ENCODE measurements at regions of chr16 and their contacts with region 1.

Region 1: GRCh38 chr16:12095275-12096156 is 119.0 kb downstream of the SNX29 start:
- DNase-seq: peak; percentile 76
- ATAC-seq: peak; percentile 63 to 74

Region 2: DNA sequence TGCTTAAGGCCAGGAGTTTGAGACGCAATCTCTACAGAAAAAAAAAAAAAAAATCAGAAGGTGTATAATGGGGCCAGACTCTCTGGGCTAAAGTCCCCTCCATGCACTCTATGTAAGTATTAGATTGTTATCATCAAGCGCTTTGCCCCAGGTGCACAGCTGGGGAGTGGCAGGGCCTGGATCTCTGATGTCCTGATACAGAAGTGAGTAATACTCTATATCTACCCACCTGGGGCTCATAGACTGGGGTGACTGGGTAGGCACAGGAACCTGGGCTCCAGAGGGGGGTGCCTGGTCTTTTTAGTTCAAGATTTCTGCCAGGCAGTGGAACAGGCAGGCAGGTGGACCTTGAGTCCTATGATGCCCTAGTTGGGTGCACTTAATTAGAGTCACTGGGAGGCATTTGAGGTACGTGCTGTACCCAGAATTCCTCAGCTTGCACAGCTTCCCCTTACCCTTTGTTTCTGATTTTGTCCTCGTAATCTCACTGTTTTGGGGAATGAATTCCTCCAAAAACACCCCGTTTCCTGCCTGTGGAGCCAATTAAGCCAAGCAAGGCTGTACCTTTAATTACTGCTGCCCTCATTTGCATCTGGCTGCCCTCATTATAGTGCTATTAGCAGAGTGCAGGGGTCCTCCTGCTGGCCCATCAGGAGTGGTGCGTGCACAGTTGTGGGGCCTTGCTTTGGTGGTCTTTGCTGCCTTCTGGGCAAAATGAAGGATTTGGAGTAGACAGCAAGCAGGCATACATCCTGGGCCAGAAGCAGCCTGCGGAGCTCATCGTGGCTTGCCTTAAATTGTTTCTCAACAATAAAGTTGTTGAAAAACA is 120.0 kb after region 1 on chr16:
- intact Hi-C with region 1: loop called (anchors 2 to 10 kb)
- DNase-seq: no peak
- ATAC-seq: no peak

Region 3: DNA sequence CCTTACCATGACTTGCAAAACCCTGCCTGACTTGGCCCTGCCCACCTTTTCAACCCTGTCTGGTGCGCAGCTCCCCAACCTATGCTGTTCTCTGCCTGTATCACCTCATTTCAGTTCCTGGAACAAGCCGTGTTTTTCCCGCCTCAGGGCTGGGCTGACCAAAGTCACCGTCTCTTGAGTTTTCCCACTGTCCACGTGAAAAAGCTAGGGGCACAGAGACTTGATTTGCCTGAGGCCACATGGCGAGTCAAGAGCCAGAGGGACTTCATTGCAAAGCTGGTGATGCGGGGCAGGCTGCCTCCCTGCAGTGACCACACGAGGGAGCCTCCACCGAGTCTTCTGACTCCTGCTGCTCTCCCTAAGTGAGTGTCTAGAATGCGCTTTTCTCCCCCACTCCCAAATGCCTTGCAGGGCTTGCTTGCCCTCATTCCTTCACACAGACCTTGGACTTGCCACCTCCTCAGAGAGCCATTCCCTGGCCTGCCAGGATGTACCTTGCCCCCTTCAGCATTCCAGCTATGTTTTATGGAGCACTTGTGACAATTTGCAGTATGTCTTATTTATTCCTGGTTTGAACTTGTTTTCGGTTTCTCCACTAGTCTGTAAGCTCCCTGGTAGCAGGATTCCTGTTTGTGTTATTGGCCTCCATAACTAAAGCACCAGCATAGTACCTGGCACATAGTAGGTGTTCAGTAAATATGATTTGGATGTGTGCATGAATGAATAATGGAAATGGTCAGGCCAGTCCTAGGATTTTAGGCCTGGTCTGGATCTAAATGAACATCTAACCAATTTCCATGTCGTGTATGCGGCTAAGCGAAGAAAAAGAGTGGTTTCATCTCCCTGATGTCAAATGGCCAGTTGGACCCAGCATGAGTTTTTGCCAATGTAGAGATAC is 133.3 kb after region 1 on chr16:
- intact Hi-C with region 1: loop called in 1 of 2 experiments (anchors 10 kb)
- DNase-seq: peak; percentile 40
- ATAC-seq: peak; percentile 83 to 90

Region 4: DNA sequence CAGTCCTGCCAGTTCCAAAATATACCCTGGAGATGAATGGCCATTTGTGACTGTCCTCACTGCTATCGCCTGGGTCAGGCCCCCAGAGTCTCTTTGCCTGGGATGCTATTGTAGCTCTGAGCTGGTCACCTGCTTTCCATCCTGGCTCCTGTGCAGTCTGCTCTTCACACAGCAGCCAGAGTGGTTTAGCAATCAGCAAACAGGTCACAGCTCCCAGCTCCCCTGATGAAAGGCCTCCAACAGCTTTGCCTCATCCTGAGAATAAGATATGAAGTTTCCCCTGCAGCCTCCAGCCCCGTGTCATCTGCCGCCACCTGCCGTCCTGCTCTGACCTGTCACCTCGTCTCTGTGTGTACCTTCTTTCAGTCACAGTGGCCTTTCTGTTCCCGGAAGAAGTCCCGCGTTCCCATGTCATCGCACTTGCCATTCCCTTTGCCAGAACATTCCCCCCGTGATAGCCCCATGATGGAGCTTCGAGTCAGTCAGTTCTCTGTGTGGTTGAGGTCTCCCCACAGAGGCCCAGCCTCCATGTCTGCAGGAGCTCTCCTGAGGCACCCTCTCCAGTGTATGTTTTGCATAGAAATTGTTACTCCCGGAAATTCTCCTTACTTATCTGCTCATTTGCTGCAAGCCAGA is 162.5 kb after region 1 on chr16:
- intact Hi-C with region 1: loop called in 1 of 2 experiments (anchors 10 kb)
- DNase-seq: no peak
- ATAC-seq: peak in 1 of 2 donors; percentile 50

Region 5: DNA sequence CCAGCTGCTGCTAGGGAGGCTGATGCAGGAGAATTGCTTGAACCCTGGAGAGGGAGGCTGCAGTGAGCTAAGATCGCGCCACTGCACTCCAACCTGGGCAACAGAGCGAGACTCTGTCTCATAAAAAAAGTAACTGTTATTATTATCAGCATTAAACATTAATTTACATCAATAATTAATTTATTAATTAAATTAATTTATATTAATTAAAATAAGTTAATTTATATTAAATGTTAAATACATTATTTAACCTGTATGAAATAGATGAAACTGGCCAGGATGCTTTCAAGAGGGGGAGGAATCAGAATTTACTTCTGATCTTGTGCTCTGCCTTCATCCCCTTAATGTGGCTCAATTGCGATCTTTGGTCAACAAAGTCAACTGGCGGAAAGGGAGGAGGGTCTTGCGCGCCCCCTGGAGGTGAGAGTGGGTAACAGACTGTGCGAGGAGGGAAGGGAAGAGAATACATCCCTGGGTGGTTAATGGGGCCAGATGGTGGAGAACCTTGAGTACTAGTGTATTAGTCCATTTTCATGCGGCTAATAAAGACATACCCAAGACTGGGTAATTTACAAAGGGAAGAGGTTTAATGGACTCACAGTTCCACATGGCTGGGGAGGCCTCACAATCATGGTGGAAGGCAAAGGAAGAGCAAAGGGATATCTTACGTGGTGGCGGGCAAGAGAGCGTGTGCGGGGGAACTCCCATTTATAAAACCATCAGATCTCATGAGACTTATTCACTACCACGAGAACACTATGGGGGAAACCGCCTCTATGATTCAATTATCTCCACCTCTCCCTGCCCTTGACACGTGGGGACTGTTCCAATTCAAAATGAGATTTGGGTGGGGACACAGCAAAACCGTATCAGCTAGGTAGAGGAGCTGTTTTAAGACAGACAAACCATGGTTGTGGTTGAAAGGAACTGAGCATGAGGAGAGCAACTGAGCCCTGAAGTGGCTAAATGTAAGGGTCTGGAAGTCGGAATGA is 723.9 kb after region 1 on chr16:
- intact Hi-C with region 1: loop called in 1 of 2 experiments (anchors 10 kb)
- DNase-seq: peak; percentile 65
- ATAC-seq: peak; percentile 62 to 73

Measured in left cardiac atrium (tissue), 4 donors.